ENCODE measurements at regions of chr9 and their contacts with region 1.

Region 1: GRCh38 chr9:128117613-128118471 is 9.7 kb downstream of the PTGES2 start:
- DNase-seq: peak; percentile 96
- ATAC-seq: peak; percentile 88
- H3K4me3 Mint-ChIP-seq: no peak overlapping the region
- H3K27ac Mint-ChIP-seq: no peak overlapping the region
- H3K4me1 Mint-ChIP-seq: peaks cover 5% of the 10 kb centered on the region
- H3K27me3 Mint-ChIP-seq: no peaks in the 10 kb centered on the region

Region 2: GRCh38 chr9:128026255-128026772 is 91.5 kb before region 1 on chr9:
- CTCF ChIA-PET with region 1: no interaction called
- DNase-seq: peak; percentile 93
- ATAC-seq: peak; percentile 69
- H3K4me3 Mint-ChIP-seq: peak overlapping the region; percentile 31
- H3K27ac Mint-ChIP-seq: peak overlapping the region; percentile 95
- H3K4me1 Mint-ChIP-seq: peaks cover 91% of the 10 kb centered on the region
- H3K27me3 Mint-ChIP-seq: peaks cover 3% of the 10 kb centered on the region

Region 3: GRCh38 chr9:128104171-128104618 is 13.6 kb before region 1 on chr9:
- CTCF ChIA-PET with region 1: interaction called, 23 read pairs
- DNase-seq: no peak
- ATAC-seq: no peak
- H3K4me3 Mint-ChIP-seq: no peak overlapping the region
- H3K27ac Mint-ChIP-seq: no peak overlapping the region
- H3K4me1 Mint-ChIP-seq: peaks cover 18% of the 10 kb centered on the region
- H3K27me3 Mint-ChIP-seq: no peaks in the 10 kb centered on the region

Region 4: GRCh38 chr9:128127990-128128835 is 10.4 kb after region 1 on chr9:
- CTCF ChIA-PET with region 1: interaction called, 24 read pairs
- DNase-seq: peak; percentile 88
- ATAC-seq: peak; percentile 83
- H3K4me3 Mint-ChIP-seq: peak overlapping the region; percentile 95
- H3K27ac Mint-ChIP-seq: peak overlapping the region; percentile 96
- H3K4me1 Mint-ChIP-seq: peaks cover 28% of the 10 kb centered on the region
- H3K27me3 Mint-ChIP-seq: peaks cover 14% of the 10 kb centered on the region

Region 5: GRCh38 chr9:128296337-128297220 is 178.7 kb after region 1 on chr9:
- CTCF ChIA-PET with region 1: no interaction called
- DNase-seq: no peak
- ATAC-seq: no peak
- H3K4me3 Mint-ChIP-seq: no peak overlapping the region
- H3K27ac Mint-ChIP-seq: no peak overlapping the region
- H3K4me1 Mint-ChIP-seq: peaks cover 10% of the 10 kb centered on the region
- H3K27me3 Mint-ChIP-seq: no peaks in the 10 kb centered on the region

Measured in activated CD8-positive, alpha-beta memory T cell treated with anti-CD3 and anti-CD28 coated beads, Interleukin-2, amount 10 ng/mL, durations not matched to agents 7 days and 5 days (primary cell).